ENCODE measurements at regions of chr3 and their contacts with region 1.

Region 1: GRCh38 chr3:40179016-40179415 is 130.5 kb upstream of the EIF1B start:
- DNase-seq: peak; percentile 44
- H3K4me3 ChIP-seq: no peak overlapping the region
- H3K27ac ChIP-seq: no peak overlapping the region
- H3K4me1 ChIP-seq: no peaks in the 10 kb centered on the region
- H3K27me3 ChIP-seq: no peaks in the 10 kb centered on the region
- CTCF ChIP-seq: peak; percentile 58

Region 2: GRCh38 chr3:39541917-39542329 is 637.1 kb before region 1 on chr3:
- CTCF ChIA-PET with region 1: no interaction called
- POLR2A ChIA-PET with region 1: no interaction called
- intact Hi-C with region 1: loop called (anchors 5 kb)
- DNase-seq: peak; percentile 19
- H3K4me3 ChIP-seq: no peak overlapping the region
- H3K27ac ChIP-seq: no peak overlapping the region
- H3K4me1 ChIP-seq: no peaks in the 10 kb centered on the region
- H3K27me3 ChIP-seq: no peaks in the 10 kb centered on the region
- CTCF ChIP-seq: peak; percentile 51

Region 3: DNA sequence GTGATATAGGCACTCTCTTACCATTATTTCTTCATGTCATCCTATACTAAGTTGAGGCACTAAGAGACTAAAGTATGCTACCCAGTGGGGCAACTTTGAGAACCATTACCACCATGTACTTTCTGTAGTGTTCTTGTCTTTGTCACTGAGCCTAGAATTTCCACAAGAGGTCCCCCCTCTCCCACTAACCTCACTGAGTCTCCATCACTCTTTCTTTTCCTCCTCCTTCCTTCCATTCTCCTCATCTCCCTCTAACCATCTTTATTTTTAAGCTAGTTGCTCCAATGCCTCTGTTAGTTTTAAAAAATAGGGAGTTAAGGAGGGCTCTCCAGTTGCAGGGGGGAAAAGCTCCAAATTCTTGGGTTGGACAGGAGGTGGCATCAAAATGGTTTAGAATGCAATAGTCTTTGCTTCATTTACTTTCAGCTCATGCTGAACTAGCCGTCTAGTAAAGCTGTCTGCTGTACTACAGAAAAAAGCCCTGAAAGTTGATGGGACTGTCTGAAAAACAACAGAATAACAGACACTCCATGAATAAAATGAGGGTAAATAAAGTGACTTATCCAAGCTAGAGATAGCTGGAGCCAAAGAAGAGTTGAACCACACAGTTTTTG is 454.7 kb before region 1 on chr3:
- CTCF ChIA-PET with region 1: no interaction called
- POLR2A ChIA-PET with region 1: no interaction called
- intact Hi-C with region 1: loop called (anchors 5 kb)
- DNase-seq: no peak
- H3K4me3 ChIP-seq: no peak overlapping the region
- H3K27ac ChIP-seq: no peak overlapping the region
- H3K4me1 ChIP-seq: no peaks in the 10 kb centered on the region
- H3K27me3 ChIP-seq: no peaks in the 10 kb centered on the region
- CTCF ChIP-seq: 0 out of 2 replicates have a peak, but pooled peaks have one; percentile 14

Region 4: DNA sequence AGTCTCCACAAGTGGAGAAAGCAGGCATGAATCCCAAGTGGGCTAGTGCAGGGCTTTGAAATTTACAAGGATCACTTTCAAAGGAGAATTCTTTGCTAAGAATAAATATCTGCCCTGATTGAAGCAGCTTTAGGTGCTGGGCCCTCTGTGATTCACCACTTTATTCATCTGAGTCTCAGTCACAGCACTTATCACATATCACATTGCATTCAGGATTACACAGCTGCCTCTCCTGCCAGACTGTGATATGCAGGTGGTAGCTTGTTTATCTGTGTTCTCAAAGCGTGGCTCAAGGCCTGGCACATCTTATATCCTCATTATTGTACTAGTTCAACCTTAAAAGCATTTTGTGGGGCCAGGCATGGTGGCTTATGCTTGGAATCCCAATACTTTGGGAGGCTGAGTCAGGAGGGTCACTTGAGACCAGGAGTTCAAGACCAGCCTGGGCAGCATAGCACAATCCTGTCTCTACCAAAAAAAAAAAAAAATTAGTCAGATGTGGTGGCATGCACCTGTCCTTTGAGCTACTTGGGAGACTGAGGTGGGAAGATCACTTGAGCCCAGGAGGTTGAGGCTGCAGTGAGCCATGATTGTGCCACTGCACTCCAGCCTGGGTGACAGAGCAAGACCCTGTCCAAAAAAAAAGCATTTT is 26.4 kb before region 1 on chr3:
- CTCF ChIA-PET with region 1: no interaction called
- POLR2A ChIA-PET with region 1: no interaction called
- intact Hi-C with region 1: no loop called
- DNase-seq: no peak
- H3K4me3 ChIP-seq: no peak overlapping the region
- H3K27ac ChIP-seq: no peak overlapping the region
- H3K4me1 ChIP-seq: no peaks in the 10 kb centered on the region
- H3K27me3 ChIP-seq: no peaks in the 10 kb centered on the region
- CTCF ChIP-seq: no peak